Activated CD8-positive, alpha-beta memory T cell treated with anti-CD3 and anti-CD28 coated beads, Interleukin-2, amount 10 ng/mL, durations not matched to agents 7 days and 5 days (primary cell): ENCODE measurements at regions of chr2 and their contacts with region 1.

Region 1: DNA sequence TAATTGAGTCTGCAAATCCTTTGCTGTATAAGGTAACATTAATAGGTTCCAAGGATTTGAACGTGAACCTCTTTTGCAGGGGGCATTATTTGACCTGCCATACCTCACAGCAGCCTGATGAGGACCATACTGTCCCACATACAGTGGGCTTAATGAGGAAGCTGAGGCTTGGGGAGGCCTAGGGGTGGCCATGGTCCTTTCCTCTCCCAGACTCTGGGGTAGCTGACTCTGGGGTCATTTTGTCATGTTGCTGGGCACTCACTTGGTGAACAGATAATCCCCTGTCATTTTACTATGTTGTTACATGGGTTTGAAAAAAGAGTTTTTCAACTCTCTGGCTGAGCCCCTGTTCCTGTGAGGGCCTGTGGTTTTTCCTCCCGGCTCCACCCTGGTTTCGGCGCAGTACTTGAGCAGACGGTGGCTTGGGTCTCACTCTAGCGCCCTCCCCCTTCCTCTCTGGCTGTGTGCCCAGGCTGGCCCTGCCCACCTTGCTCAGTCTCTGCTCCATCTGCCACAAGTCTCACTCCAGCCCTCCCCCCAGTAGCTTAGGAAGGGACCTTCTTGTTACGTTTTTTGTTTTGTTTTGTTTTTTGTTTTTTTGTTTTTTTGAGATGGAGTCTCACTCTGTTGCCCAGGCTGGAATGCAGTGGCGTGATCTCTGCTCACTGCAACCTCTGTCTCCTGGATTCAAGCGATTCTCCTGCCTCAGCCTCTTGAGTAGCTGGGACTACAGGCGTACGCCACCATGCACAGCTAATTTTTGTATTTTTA is 21.0 kb downstream of the INPP4A start:
- DNase-seq: peak; percentile 86
- ATAC-seq: peak; percentile 26
- H3K4me3 Mint-ChIP-seq: peak overlapping the region; percentile 61
- H3K27ac Mint-ChIP-seq: peak overlapping the region; percentile 93
- H3K4me1 Mint-ChIP-seq: peaks cover 93% of the 10 kb centered on the region
- H3K27me3 Mint-ChIP-seq: no peaks in the 10 kb centered on the region

Region 2: DNA sequence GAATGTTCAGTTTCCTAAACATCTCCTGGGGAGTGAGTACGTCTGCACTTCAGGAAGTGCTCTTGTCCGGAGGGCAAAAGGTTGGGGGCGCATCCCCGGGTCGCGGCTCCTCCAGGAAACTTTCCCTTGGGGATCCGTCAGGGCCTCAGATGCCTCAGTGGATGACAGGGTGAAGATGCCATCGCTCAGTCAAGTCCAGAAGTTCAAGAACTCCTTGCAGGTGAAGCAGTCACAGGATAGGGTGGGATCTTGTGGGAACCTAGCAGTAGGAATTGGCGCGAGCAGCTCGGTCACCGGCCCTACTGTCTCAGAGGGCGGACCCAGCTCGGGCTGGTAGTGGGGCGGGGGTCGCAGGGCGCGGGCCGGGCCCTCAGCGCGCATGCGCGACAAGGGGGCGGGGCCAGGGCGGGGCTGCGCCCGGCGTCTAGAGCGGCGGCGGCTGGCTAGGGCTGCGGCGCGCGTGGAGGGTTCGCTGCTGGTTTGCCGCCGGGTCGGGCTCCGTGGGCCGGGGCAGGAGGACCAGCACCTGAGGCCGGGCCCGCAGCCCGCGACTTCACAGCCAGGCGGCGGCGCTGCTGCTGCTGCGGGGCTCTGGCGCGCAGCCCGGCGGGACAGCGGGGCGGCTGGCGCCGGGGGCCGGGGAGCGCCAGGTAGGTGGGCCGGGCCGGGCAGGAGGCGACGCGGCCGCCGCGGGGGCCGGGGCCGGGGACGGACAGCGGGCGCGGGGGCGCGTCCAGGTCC is 21.0 kb before region 1 on chr2 and contains the start of gene INPP4A:
- CTCF ChIA-PET with region 1: interaction called, 79 read pairs
- DNase-seq: peak; percentile 82
- ATAC-seq: peak; percentile 71
- H3K4me3 Mint-ChIP-seq: peak within 1 kb of the TSS; percentile 88
- H3K27ac Mint-ChIP-seq: peak within 1 kb of the TSS; percentile 90
- H3K4me1 Mint-ChIP-seq: peaks cover 40% of the 10 kb centered on the region
- H3K27me3 Mint-ChIP-seq: no peaks in the 10 kb centered on the region
- total RNA-seq, gene INPP4A: 144 to 229 TPM

Region 3: GRCh38 chr2:98455494-98455976 is 10.1 kb before region 1 on chr2:
- CTCF ChIA-PET with region 1: interaction called, 79 read pairs
- DNase-seq: no peak
- ATAC-seq: peak; percentile 59
- H3K4me3 Mint-ChIP-seq: peak overlapping the region; percentile 66
- H3K27ac Mint-ChIP-seq: peak overlapping the region; percentile 89
- H3K4me1 Mint-ChIP-seq: peaks cover 95% of the 10 kb centered on the region
- H3K27me3 Mint-ChIP-seq: no peaks in the 10 kb centered on the region

Region 4: GRCh38 chr2:98476192-98476868 is 10.7 kb after region 1 on chr2:
- CTCF ChIA-PET with region 1: interaction called, 166 read pairs
- DNase-seq: no peak
- ATAC-seq: no peak
- H3K4me3 Mint-ChIP-seq: no peak overlapping the region
- H3K27ac Mint-ChIP-seq: peak overlapping the region; percentile 66
- H3K4me1 Mint-ChIP-seq: peaks cover 100% of the 10 kb centered on the region
- H3K27me3 Mint-ChIP-seq: no peaks in the 10 kb centered on the region

Region 5: DNA sequence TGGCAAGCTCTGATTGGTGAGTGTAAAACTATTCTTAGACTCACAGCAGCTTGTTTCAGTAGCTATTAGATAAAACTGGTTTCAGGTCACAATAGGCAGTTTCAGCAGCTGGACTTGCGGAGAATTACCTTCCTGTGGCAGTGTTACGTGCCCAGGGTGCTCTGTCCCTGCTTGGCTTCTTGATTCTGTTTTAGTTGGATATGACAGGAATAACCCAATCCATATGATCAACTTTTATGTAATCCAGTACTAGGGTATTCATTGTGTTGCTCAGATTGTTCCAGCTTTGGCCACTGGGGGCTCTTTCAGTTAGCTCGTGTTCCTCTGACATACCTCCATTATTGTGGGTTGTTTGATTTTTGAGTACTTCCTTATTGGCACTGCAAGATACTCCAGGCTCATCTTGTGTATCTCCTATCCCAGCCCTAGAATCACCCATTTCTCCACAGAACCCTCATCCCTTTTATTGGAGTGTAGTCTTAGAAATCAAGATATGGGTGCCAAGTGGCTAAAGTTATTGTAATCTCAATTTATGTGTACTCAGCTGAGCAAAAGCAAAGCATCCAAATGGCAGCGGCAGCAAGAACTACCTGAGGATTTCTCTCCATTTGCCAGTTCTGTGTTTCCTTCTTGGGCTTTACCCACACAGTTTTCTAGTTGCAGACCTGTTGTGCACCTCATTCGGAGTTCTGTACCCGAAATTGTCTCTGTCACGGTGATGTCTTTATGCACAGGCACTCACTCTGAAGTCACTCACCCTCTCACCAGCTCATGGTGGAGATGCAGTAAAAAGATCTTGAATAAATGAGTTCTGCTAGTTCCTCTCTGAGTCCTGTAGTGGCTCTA is 22.4 kb after region 1 on chr2:
- CTCF ChIA-PET with region 1: interaction called, 166 read pairs
- DNase-seq: peak; percentile 59
- ATAC-seq: peak; percentile 40
- H3K4me3 Mint-ChIP-seq: no peak overlapping the region
- H3K27ac Mint-ChIP-seq: peak overlapping the region; percentile 0
- H3K4me1 Mint-ChIP-seq: peaks cover 79% of the 10 kb centered on the region
- H3K27me3 Mint-ChIP-seq: no peaks in the 10 kb centered on the region

Region 6: GRCh38 chr2:98552499-98553179 is 87.0 kb after region 1 on chr2:
- CTCF ChIA-PET with region 1: no interaction called
- DNase-seq: peak; percentile 28
- ATAC-seq: no peak
- H3K4me3 Mint-ChIP-seq: no peak overlapping the region
- H3K27ac Mint-ChIP-seq: no peak overlapping the region
- H3K4me1 Mint-ChIP-seq: peaks cover 87% of the 10 kb centered on the region
- H3K27me3 Mint-ChIP-seq: no peaks in the 10 kb centered on the region

Region 7: GRCh38 chr2:98586551-98587140 is 121.0 kb after region 1 on chr2:
- CTCF ChIA-PET with region 1: no interaction called
- DNase-seq: peak; percentile 33
- ATAC-seq: no peak
- H3K4me3 Mint-ChIP-seq: no peak overlapping the region
- H3K27ac Mint-ChIP-seq: no peak overlapping the region
- H3K4me1 Mint-ChIP-seq: peaks cover 6% of the 10 kb centered on the region
- H3K27me3 Mint-ChIP-seq: no peaks in the 10 kb centered on the region